HAP-1 (cell line): ENCODE measurements at regions of chr20 and their contacts with region 1.

Region 1: GRCh38 chr20:44080646-44081267 is 106.2 kb downstream of the JPH2 start:
- DNase-seq: peak; percentile 64 to 77
- H3K4me3 ChIP-seq: no peak overlapping the region
- H3K4me1 ChIP-seq: no peaks in the 10 kb centered on the region
- H3K27me3 ChIP-seq: no peaks in the 10 kb centered on the region

Region 2: DNA sequence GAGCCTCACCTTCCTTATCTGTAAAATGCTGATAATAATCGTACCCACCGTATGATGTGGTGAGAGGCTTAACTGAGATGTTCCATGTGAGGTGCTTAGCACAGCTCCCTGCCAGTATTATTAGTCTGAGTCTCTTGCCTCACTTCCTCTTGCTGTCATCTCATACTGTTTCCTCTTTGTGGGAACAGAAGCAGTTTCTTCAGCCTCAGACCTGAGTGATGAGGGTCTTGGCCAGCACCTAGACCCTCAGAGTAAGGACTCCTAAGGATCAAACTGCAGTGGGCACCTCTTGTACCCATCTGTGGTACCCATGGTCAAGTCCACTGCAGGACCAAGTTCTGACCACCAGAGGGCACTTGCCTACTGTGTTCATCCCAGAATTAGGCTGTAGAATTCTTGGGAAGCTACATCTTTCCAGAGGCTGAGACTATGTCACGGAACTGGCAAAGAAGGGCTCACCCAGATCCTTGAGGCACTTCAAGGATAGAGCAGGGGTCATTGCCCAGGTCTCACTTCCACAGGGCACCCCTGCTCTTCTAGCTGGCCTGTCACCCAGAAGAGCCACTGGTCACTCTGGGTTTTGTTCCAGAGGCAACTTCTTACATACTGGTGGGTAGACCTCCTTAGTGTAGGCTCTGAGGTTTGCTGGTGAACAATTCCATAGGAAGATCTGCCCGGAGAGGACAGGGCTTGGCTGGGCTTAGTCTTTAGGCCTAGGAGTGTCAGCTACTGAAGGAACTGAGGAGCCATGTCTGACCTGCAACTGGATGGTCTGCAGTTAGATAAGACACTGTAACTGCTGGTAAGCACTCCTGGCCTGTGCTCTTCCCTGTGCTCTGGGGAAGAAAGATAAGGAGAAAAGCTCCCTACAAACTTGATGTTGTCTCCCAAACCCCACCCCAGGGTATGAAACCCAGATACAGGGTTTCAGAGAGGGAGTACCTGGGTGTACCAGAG is 542.6 kb before region 1 on chr20:
- in situ Hi-C with region 1: loop called (anchors 10 kb)
- DNase-seq: peak; percentile 6 to 75
- H3K4me3 ChIP-seq: no peak overlapping the region
- H3K4me1 ChIP-seq: no peaks in the 10 kb centered on the region
- H3K27me3 ChIP-seq: peaks cover 2% of the 10 kb centered on the region; the same call in 1 of the 2 replicates

Region 3: DNA sequence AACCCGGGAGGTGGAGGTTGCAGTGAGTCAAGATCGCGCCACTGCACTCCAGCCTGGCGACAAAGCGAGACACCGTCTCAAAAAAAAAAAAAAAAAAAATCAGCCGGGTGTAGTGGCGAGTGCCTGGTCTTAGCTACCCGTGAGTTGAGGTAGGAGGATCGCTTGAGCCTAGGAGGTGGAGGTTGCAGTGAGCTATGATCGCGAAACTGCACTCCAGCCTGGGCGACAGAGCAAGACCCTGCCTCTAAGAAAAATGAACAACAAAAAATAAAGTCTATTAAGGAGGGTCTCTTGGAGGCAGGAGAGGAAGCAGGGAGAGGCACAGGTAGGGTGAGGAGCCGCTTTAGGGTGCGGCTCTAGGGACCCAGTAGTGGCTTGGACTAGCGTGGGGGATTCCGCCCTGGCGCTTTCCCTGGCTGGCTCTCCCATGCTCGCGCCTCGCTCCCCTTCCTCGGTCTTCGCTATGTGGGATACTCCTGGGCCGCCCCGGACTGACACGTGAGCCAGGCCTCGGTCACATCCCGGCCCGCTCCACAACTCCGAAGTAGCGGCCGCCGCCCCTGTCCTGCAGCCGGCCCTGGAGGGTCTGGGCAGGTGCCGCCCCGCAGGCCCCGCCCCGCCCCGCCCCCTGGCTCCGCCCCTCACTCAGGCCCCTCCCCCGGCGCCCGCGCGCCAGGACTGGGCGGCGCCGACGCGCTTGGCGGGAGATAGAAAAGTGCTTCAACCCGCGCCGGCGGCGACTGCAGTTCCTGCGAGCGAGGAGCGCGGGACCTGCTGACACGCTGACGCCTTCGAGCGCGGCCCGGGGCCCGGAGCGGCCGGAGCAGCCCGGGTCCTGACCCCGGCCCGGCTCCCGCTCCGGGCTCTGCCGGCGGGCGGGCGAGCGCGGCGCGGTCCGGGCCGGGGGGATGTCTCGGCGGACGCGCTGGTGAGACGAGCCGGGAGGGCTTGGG is 414.1 kb before region 1 on chr20 and contains the start of gene MYBL2:
- in situ Hi-C with region 1: no loop called
- DNase-seq: peak; percentile 47 to 82
- H3K4me3 ChIP-seq: peak within 1 kb of the TSS; percentile 68
- H3K4me1 ChIP-seq: peaks cover 3% of the 10 kb centered on the region
- H3K27me3 ChIP-seq: no peaks in the 10 kb centered on the region

Region 4: DNA sequence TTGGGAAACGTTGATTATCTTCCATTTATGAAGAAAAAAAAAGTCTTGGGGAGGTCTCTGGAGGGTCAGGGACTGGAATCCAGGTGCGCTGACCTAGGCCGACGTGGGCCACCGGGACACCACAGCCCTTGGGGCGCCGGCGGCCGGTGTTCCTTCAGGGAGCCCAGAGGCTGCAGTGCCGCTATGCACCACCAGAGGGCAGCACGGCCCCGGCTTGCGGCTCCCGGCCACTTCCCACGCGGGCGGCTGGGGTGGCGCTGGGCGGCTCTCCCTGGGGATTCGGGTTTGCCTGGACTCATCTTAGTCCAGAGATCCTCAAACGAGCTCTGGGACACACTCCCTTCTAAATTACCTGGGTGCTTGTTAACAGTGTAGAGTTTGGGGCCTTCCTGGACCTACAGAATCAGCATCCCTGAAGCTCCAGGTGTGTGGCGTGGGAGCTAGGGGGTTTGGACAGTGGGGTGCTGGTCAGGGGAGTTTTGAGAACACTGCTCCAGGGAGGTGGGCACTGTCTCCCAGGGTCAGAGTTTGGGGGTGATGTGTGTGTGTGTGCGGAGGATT is 330.9 kb before region 1 on chr20:
- in situ Hi-C with region 1: loop called (anchors 5 kb)
- DNase-seq: peak; percentile 27 to 91
- H3K4me3 ChIP-seq: no peak overlapping the region
- H3K4me1 ChIP-seq: no peaks in the 10 kb centered on the region
- H3K27me3 ChIP-seq: no peaks in the 10 kb centered on the region